ENCODE measurements at regions of chr19 and their contacts with region 1.

Region 1: GRCh38 chr19:48110350-48110966 is at the start of gene PLA2G4C:
- H3K4me3 Mint-ChIP-seq: peak within 1 kb of the TSS; percentile 74
- H3K27ac Mint-ChIP-seq: peak within 1 kb of the TSS; percentile 88
- H3K4me1 Mint-ChIP-seq: peaks cover 26% of the 10 kb centered on the region
- H3K27me3 Mint-ChIP-seq: peaks cover 11% of the 10 kb centered on the region

Region 2: DNA sequence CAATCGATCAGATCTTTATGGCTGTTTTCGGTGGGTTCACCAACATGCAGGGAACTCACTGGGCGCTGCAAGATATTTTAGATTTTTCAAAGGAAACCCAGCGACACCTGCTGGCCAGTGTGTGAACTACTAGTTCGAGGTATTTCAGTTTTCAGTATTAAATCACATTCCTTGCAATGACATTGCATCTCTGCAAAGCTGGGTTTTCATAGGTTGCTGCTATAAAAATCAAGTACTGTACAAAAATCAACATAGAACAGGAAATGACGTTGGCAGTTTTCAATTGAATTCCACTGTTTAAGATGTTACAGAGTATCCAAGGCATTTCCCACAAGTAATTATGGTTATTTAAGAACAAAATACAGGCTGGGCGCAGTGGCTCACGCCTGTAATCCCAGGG is 42.1 kb after region 1 on chr19:
- intact Hi-C with region 1: loop called (anchors 1 kb)
- H3K4me3 Mint-ChIP-seq: no peak overlapping the region
- H3K27ac Mint-ChIP-seq: no peak overlapping the region
- H3K4me1 Mint-ChIP-seq: no peaks in the 10 kb centered on the region
- H3K27me3 Mint-ChIP-seq: no peaks in the 10 kb centered on the region

Region 3: GRCh38 chr19:48255376-48256303 is 145.2 kb after region 1 on chr19 and contains the start of gene CARD8:
- intact Hi-C with region 1: loop called (anchors 1 kb)
- H3K4me3 Mint-ChIP-seq: peak within 1 kb of the TSS; percentile 83
- H3K27ac Mint-ChIP-seq: peak within 1 kb of the TSS; percentile 98
- H3K4me1 Mint-ChIP-seq: peaks cover 57% of the 10 kb centered on the region
- H3K27me3 Mint-ChIP-seq: no peaks in the 10 kb centered on the region

Measured in dendritic cell treated with granulocyte-macrophage colony-stimulating factor and Interleukin-4, amounts not matched to agents 40 ng/mL and 50 ng/mL, for 4 days (primary cell).